ENCODE measurements at regions of chr7 and their contacts with region 1.

Region 1: GRCh38 chr7:121102619-121103018 is 114.1 kb downstream of the CPED1 start:
- DNase-seq: no peak
- H3K4me3 ChIP-seq: no peak overlapping the region
- H3K27me3 ChIP-seq: no peaks in the 10 kb centered on the region
- CTCF ChIP-seq: no peak

Region 2: DNA sequence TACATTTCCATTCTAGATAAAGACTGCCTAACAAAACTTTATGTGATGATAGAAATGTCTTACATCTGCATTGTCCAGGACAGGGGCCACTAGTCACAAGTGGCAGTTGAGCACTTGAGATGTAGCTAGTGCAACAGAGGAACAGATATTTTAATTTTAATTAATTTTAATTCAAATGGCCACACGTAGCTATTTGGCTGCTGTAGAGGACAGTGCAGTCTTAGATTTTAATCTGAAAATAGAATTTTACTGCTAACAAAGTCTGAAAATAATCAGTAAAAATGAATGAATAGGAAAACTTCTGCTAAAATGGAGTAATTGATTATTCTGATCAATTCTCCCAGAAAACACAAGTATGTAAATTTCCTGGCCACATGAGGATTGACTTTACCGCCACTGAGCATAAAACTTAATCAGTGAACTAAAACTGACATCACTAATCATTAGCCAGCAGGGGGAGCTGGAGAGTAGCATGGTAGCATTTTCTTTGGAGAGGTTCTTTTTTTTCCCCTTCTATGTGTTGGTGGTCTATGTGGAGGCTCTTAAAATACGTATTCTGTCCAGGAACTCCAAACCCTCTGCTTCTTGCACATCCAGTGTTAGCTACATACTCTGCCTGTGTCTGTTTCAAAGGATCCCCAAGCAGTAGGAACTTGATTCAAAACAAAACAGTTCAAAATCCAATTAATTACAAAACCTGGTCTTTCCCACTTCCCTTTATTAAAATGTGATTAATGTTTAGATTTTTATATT is 296.8 kb before region 1 on chr7:
- CTCF ChIA-PET with region 1: interaction called, 15 read pairs
- POLR2A ChIA-PET with region 1: no interaction called
- DNase-seq: no peak
- H3K4me3 ChIP-seq: no peak overlapping the region
- H3K27me3 ChIP-seq: no peaks in the 10 kb centered on the region; the same call in 1 of the 2 replicates
- CTCF ChIP-seq: peak; percentile 86

Measured in BJ (cell line).